ENCODE measurements at regions of chr6 and their contacts with region 1.

Region 1: DNA sequence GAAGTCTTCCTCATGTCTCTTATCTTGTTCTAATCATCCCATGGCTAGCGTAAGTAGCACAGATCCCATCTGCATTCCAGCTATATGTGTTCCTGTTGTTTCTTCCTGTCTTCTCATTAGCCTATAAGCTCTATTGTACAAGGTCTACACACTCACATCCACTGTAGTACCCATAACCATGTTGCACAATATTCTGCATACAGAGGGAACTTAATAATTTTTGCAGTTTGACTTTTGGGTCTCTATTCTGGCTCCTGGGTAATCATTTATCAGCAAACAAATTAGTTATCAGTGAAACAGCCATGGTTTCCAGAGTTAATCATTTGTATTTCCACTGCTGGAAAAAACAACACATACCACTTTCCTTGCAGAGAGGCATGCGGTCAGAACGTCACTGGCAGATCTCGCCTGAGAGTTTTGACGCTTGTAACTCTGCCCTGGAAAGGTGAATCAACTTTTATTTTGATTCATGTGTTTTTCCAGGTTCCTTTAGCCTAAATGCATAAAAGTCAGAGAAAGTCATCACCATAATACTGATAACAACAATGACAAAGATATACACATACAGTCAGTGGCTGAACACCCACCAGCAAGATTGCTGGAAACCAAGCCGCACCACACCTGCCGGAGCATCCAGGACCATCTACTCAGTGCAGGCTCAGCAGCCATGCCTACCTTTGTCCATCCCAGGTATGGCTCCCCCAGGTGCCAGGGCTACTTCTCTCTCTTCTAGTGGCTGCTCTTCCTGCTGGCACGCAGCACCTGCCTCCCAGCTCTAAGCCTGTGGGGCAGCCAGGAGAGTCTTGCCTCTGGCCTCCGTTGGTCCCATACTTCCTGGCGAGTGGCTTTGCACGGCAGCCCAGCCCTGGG is 158.2 kb downstream of the QRSL1 start:
- DNase-seq: no peak
- ATAC-seq: no peak
- H3K4me3 ChIP-seq: no peak overlapping the region
- H3K27ac ChIP-seq: no peak overlapping the region
- H3K4me1 ChIP-seq: no peaks in the 10 kb centered on the region
- H3K27me3 ChIP-seq: no peaks in the 10 kb centered on the region

Region 2: DNA sequence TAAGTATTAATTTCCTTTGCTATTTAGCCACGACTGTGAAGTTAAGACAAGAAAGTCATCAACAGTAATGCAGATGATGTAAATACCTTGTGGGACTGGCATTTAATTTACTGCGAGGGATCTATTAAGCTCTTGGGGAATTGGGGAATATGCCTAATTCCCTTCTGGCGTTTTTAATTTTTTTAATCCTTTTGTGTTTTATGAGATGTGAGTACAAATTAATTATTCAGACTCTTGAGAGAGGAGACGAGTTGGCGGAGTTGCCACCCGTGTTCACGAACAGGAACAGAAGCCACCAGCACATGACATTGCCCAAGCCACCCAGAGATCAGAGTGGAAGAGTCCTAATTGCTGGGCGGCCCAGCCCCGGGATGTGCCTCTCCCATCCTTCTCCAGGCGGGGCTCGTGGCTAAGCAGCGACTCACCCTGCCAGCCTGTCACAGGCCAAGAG is 427.6 kb before region 1 on chr6:
- intact Hi-C with region 1: loop called in 1 of 2 experiments (anchors 5 kb)
- DNase-seq: no peak
- ATAC-seq: no peak
- H3K4me3 ChIP-seq: no peak overlapping the region
- H3K27ac ChIP-seq: no peak overlapping the region
- H3K4me1 ChIP-seq: no peaks in the 10 kb centered on the region
- H3K27me3 ChIP-seq: no peaks in the 10 kb centered on the region

Measured in aorta (tissue), 5 donors.